ENCODE measurements at regions of chr2 and their contacts with region 1.

Region 1: DNA sequence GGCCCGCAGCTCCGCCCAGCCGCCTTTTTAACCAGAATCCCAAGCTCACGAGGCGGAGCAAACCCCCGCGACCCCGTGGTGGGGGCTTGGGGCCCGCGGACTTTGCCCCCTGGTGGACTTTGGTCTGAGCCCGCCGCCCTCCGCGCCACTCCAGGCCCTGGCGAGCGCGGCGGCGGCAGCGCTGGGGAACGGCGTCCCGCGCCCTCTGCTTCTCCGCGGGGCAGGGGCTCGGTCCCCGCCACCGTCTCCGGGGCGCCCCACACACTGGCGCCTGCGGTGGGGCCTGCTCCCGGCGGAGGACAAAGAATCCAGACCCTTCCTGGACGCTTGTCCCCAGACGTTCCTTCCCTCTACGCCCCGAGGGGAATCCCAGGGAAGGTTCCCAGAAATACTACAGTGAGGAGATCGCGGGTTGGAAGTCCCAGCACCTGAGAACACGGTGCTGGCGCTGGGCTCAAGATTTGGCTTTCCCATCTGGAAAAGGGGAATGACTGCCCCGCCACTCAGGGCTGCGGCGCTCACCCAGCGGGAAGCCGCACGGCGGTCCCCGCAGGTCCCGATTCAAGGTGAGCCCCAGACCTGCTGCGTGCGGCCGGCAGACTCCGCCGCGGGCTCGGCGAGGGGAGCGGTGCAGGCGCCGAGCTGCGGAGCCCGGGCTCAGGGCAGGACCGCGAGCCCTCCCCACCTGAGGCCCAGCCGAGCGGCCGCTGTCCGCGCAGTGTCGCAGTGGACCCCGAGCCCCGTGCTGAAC is at the start of gene HAAO:
- DNase-seq: no peak
- ATAC-seq: no peak
- H3K4me3 ChIP-seq: no peak within 1 kb of the TSS
- H3K27ac ChIP-seq: no peak within 1 kb of the TSS
- H3K4me1 ChIP-seq: peaks cover 7% of the 10 kb centered on the region; the same call in 2 of the 3 replicates
- CTCF ChIP-seq: no peak
- EP300 ChIP-seq: no peak
- POLR2A ChIP-seq: no peak
- RAD21 ChIP-seq: no peak
- polyA plus RNA-seq, gene HAAO: not detected in 2 replicates

Region 2: GRCh38 chr2:42741140-42741539 is 51.6 kb before region 1 on chr2:
- CTCF ChIA-PET with region 1: no interaction called
- POLR2A ChIA-PET with region 1: no interaction called
- DNase-seq: no peak
- ATAC-seq: no peak
- H3K4me3 ChIP-seq: no peak overlapping the region
- H3K27ac ChIP-seq: no peak overlapping the region
- H3K4me1 ChIP-seq: no peaks in the 10 kb centered on the region
- CTCF ChIP-seq: no peak
- EP300 ChIP-seq: no peak
- POLR2A ChIP-seq: no peak
- RAD21 ChIP-seq: no peak

Region 3: DNA sequence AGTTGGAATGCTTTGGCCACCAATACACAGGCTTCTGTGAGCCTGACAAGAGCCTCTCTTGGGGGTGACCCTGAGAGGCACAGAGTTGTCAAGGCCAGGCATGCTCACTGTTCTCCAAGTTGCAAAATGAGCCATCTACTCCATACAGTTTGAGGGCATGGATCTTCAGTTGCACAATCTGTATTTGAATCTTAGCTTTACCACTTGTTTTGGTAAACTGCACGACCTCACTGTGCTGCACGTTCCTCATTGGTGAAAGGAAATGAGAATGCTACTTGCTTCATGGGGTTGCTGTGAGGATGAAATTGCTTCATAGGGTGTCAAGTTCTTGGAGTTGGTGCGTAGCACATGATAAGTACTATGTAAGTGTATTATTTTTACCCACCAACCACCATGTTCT is 11.6 kb after region 1 on chr2:
- CTCF ChIA-PET with region 1: interaction called, 23 read pairs
- POLR2A ChIA-PET with region 1: interaction called, 20 read pairs
- DNase-seq: no peak
- ATAC-seq: no peak
- H3K4me3 ChIP-seq: no peak overlapping the region
- H3K27ac ChIP-seq: no peak overlapping the region
- H3K4me1 ChIP-seq: peaks cover 5% of the 10 kb centered on the region
- CTCF ChIP-seq: no peak
- EP300 ChIP-seq: no peak
- POLR2A ChIP-seq: no peak
- RAD21 ChIP-seq: no peak

Region 4: GRCh38 chr2:42810121-42810970 is 17.6 kb after region 1 on chr2:
- CTCF ChIA-PET with region 1: interaction called, 23 read pairs
- POLR2A ChIA-PET with region 1: interaction called, 20 read pairs
- DNase-seq: peak; percentile 92 to 98
- ATAC-seq: peak; percentile 84 to 88
- H3K4me3 ChIP-seq: peak overlapping the region; percentile 45
- H3K27ac ChIP-seq: peak overlapping the region; percentile 88 to 92
- H3K4me1 ChIP-seq: peaks cover 10% of the 10 kb centered on the region
- CTCF ChIP-seq: peak; percentile 3; the same call in 1 of the 3 replicates
- EP300 ChIP-seq: no peak
- POLR2A ChIP-seq: peak; percentile 87
- RAD21 ChIP-seq: 0 out of 5 replicates have a peak, but pooled peaks of 1 of the 2 experiments have one; percentile 8

Measured in A549 (cell line).